CD4-positive, alpha-beta T cell (primary cell): ENCODE measurements at regions of chr6 and their contacts with region 1.

Region 1: GRCh38 chr6:26234421-26235296 is 130.3 kb upstream of the BTN3A2 start:
- DNase-seq: peak; percentile 46 to 96 (median 67)
- ATAC-seq: peak; percentile 73
- H3K4me3 ChIP-seq: peak overlapping the region; percentile 66
- H3K4me3 Mint-ChIP-seq: peak overlapping the region; percentile 100
- H3K27ac ChIP-seq: peak overlapping the region; percentile 78 to 87
- H3K27ac Mint-ChIP-seq: peak overlapping the region; percentile 99
- H3K4me1 ChIP-seq: peaks cover 19% of the 10 kb centered on the region
- H3K4me1 Mint-ChIP-seq: peaks cover 42% of the 10 kb centered on the region
- H3K27me3 ChIP-seq: no peaks in the 10 kb centered on the region
- H3K27me3 Mint-ChIP-seq: peaks cover 8% of the 10 kb centered on the region
- CTCF ChIP-seq: no peak

Region 2: DNA sequence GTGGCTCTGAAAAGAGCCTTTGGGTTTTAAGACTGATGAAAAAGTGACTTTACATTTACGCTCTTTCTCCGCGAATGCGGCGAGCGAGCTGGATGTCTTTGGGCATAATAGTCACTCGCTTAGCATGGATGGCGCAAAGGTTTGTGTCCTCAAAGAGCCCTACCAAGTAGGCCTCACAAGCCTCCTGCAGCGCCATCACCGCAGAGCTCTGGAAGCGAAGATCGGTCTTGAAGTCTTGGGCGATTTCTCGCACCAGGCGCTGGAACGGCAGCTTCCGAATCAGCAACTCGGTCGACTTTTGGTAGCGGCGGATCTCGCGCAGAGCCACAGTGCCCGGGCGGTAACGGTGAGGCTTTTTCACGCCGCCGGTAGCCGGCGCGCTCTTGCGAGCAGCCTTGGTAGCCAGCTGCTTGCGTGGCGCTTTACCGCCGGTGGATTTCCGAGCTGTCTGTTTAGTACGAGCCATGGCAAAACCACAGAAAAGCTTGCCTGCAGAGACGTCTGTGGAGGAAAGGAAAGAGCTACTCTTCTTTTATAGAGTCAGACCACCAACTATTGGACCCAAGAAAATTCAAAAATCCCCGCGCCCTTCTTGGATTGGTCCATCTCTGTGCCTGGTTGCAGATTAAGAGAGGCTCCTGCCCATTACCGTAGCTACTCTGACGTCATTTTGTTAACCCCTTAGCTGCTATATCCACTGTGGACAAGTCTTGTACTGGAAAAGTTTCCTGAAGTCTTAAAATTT is 202.9 kb before region 1 on chr6:
- CTCF ChIA-PET with region 1: no interaction called
- POLR2A ChIA-PET with region 1: interaction called, 45 read pairs
- intact Hi-C with region 1: no loop called
- DNase-seq: peak; percentile 73 to 94 (median 81)
- ATAC-seq: peak; percentile 65
- H3K4me3 ChIP-seq: peak overlapping the region; percentile 64
- H3K4me3 Mint-ChIP-seq: peak overlapping the region; percentile 97
- H3K27ac ChIP-seq: peak overlapping the region; percentile 42 to 72
- H3K27ac Mint-ChIP-seq: peak overlapping the region; percentile 99
- H3K4me1 ChIP-seq: peaks cover 35% of the 10 kb centered on the region
- H3K4me1 Mint-ChIP-seq: peaks cover 46% of the 10 kb centered on the region
- H3K27me3 ChIP-seq: no peaks in the 10 kb centered on the region
- H3K27me3 Mint-ChIP-seq: no peaks in the 10 kb centered on the region
- CTCF ChIP-seq: peak; percentile 22

Region 3: GRCh38 chr6:26163427-26164119 is 71.1 kb before region 1 on chr6:
- CTCF ChIA-PET with region 1: interaction called, 7 read pairs
- POLR2A ChIA-PET with region 1: interaction called, 365 read pairs
- intact Hi-C with region 1: no loop called
- DNase-seq: no peak
- ATAC-seq: no peak
- H3K4me3 ChIP-seq: no peak overlapping the region
- H3K4me3 Mint-ChIP-seq: peak overlapping the region; percentile 75
- H3K27ac ChIP-seq: no peak overlapping the region
- H3K27ac Mint-ChIP-seq: peak overlapping the region; percentile 80
- H3K4me1 ChIP-seq: peaks cover 57% of the 10 kb centered on the region
- H3K4me1 Mint-ChIP-seq: peaks cover 47% of the 10 kb centered on the region
- H3K27me3 ChIP-seq: no peaks in the 10 kb centered on the region
- H3K27me3 Mint-ChIP-seq: no peaks in the 10 kb centered on the region
- CTCF ChIP-seq: no peak

Region 4: DNA sequence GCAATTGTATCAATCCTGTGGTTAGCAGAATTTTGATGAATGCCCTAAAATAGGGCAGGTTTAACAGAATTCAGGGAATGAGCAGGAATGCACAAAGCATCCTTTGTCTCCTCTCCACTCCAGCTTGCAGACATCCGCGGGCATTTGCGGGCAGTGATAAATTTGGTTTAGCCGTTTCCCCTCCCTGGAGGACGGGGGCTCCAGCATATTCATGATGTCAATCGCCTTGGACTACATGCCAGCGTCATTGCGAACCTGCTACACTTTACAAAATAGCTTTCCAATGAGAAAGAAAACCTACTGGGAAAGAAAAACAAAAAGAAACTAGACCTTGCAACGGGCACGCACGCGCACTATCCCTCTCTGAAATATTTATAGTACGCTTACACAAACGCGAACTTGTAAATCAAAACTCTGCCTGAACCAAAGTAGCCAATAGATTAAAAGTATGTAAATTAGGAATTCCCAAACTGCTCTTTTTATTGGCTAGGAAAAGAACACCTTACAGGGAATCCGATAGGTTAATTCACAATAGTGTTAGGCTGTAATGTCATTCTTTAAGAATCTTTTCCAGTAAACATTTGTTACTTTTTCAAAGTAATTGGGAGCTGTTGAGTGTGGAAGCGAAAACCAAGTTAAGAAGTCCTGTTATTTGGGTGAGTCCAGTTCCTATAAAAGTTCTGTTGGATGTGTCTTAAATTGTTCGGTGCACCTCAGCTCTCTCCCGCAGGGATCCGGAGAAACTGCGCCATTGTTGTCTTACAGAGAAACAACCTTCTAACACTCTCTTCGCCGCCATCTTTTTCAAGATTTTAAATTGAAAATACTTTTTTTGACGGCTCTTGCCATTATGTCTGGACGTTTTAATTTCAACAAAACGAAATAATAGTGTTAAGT is 10.8 kb before region 1 on chr6:
- CTCF ChIA-PET with region 1: interaction called, 4 read pairs
- POLR2A ChIA-PET with region 1: interaction called, 754 read pairs
- intact Hi-C with region 1: loop called in 1 of 2 experiments (anchors 1 kb)
- DNase-seq: peak in 13 of 14 experiments; percentile 45 to 93 (median 60)
- ATAC-seq: peak; percentile 87
- H3K4me3 ChIP-seq: peak overlapping the region; percentile 68
- H3K4me3 Mint-ChIP-seq: no peak overlapping the region
- H3K27ac ChIP-seq: peak overlapping the region; percentile 72 to 82
- H3K27ac Mint-ChIP-seq: no peak overlapping the region
- H3K4me1 ChIP-seq: peaks cover 18% of the 10 kb centered on the region
- H3K4me1 Mint-ChIP-seq: peaks cover 5% of the 10 kb centered on the region
- H3K27me3 ChIP-seq: no peaks in the 10 kb centered on the region
- H3K27me3 Mint-ChIP-seq: no peaks in the 10 kb centered on the region
- CTCF ChIP-seq: no peak

Region 5: DNA sequence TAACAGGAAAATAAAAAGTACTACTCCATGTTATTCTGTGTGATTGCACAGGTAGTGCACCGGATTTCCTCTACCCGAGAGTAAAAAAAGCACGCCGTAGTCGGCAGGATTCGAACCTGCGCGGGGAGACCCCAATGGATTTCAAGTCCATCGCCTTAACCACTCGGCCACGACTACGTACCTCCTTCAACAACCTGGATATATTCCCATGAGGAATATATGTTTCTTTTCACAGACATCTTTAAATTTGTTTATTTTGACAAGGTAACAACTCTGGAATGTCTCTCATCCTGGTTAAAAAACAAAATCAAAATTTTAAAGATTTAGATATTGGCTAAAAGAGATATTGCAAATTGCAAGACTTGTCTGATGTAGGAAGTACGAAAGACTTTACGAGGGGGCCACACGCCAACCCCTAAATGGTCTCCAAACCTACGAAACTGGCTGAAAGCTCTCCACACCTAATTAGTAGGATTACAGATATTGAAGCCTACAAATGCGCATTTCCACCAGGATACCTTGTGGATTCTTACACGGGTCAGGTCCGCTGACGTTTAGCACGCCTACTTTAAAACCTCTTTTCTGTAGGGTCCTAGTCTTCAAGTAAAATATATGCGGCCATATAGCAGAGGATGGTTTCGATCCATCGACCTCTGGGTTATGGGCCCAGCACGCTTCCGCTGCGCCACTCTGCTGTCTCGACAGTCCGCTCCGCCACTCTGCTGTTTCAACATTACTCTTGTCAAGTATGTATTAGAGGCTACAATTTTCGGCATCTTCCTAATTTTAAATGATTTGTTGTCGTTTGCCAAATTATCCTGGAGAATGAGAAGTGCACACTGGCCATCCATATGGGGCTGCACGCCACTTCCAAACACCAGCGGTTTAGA is 78.1 kb after region 1 on chr6:
- CTCF ChIA-PET with region 1: no interaction called
- POLR2A ChIA-PET with region 1: interaction called, 16 read pairs
- intact Hi-C with region 1: no loop called
- DNase-seq: peak; percentile 73 to 92 (median 82)
- ATAC-seq: peak; percentile 54
- H3K4me3 ChIP-seq: peak overlapping the region; percentile 69
- H3K4me3 Mint-ChIP-seq: peak overlapping the region; percentile 92
- H3K27ac ChIP-seq: peak overlapping the region in 1 of 2 donors; percentile 24
- H3K27ac Mint-ChIP-seq: peak overlapping the region; percentile 93
- H3K4me1 ChIP-seq: peaks cover 7% of the 10 kb centered on the region
- H3K4me1 Mint-ChIP-seq: peaks cover 44% of the 10 kb centered on the region
- H3K27me3 ChIP-seq: no peaks in the 10 kb centered on the region
- H3K27me3 Mint-ChIP-seq: peaks cover 30% of the 10 kb centered on the region
- CTCF ChIP-seq: no peak

Region 6: DNA sequence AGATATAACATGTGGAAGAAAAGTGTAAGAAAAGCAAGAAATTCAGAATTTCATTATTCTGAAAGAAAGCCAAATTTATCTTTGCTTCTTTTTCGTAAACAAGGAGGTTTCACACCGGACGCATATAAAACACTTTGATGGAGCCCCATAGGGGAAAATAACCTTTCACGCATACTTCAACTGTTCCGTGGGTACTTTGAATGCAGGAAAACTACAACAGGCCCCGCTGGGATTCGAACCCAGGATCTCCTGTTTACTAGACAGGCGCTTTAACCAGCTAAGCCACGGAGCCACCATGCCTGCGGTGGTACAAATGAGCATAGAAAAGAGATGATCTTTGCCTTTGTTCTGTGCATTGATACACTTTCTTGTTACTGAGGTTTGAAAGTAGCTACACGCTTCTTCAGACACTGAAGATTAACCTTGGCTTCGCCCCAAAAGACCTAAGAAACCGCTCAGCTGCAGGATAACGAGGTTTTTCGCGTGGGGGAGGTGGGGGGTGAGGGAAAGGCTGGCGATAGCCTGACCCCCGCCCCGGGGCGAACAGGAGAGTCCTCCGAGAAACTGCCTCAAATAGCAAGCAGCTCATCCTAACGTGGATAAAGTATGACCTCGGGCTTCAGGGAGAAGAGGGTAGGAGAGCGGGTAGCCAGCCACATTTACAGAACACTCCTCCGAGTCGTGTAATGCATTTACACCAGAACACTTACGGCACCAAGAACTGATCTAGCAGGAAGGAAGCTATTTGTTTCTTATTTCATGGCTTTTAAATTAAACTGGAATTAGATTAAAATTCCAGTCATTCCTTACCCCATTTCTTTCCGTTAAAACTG is 298.3 kb after region 1 on chr6:
- CTCF ChIA-PET with region 1: no interaction called
- POLR2A ChIA-PET with region 1: interaction called, 12 read pairs
- intact Hi-C with region 1: no loop called
- DNase-seq: peak; percentile 79 to 96 (median 90)
- ATAC-seq: peak; percentile 36
- H3K4me3 ChIP-seq: peak overlapping the region; percentile 72
- H3K4me3 Mint-ChIP-seq: peak overlapping the region; percentile 98
- H3K27ac ChIP-seq: peak overlapping the region; percentile 20 to 59
- H3K27ac Mint-ChIP-seq: peak overlapping the region; percentile 97
- H3K4me1 ChIP-seq: peaks cover 28% of the 10 kb centered on the region
- H3K4me1 Mint-ChIP-seq: peaks cover 50% of the 10 kb centered on the region
- H3K27me3 ChIP-seq: no peaks in the 10 kb centered on the region
- H3K27me3 Mint-ChIP-seq: peaks cover 16% of the 10 kb centered on the region
- CTCF ChIP-seq: no peak

Region 7: GRCh38 chr6:27241443-27241842 is 1006.8 kb after region 1 on chr6:
- CTCF ChIA-PET with region 1: no interaction called
- POLR2A ChIA-PET with region 1: no interaction called
- intact Hi-C with region 1: no loop called
- DNase-seq: no peak
- ATAC-seq: no peak
- H3K4me3 ChIP-seq: no peak overlapping the region
- H3K4me3 Mint-ChIP-seq: no peak overlapping the region
- H3K27ac ChIP-seq: no peak overlapping the region
- H3K27ac Mint-ChIP-seq: no peak overlapping the region
- H3K4me1 ChIP-seq: peaks cover 10% of the 10 kb centered on the region
- H3K4me1 Mint-ChIP-seq: peaks cover 23% of the 10 kb centered on the region
- H3K27me3 ChIP-seq: peaks cover 48 to 75% of the 10 kb centered on the region in 2 experiments
- H3K27me3 Mint-ChIP-seq: peaks cover 68% of the 10 kb centered on the region
- CTCF ChIP-seq: no peak

Region 8: GRCh38 chr6:27809939-27810767 is 1575.5 kb after region 1 on chr6:
- CTCF ChIA-PET with region 1: no interaction called
- POLR2A ChIA-PET with region 1: interaction called, 17 read pairs
- intact Hi-C with region 1: no loop called
- DNase-seq: peak; percentile 63 to 98 (median 75)
- ATAC-seq: peak; percentile 61
- H3K4me3 ChIP-seq: peak overlapping the region; percentile 64
- H3K4me3 Mint-ChIP-seq: peak overlapping the region; percentile 95
- H3K27ac ChIP-seq: peak overlapping the region; percentile 69 to 81
- H3K27ac Mint-ChIP-seq: peak overlapping the region; percentile 96
- H3K4me1 ChIP-seq: peaks cover 39% of the 10 kb centered on the region
- H3K4me1 Mint-ChIP-seq: peaks cover 68% of the 10 kb centered on the region
- H3K27me3 ChIP-seq: no peaks in the 10 kb centered on the region
- H3K27me3 Mint-ChIP-seq: no peaks in the 10 kb centered on the region
- CTCF ChIP-seq: no peak